ENCODE measurements at regions of chr3 and their contacts with region 1.

Region 1: DNA sequence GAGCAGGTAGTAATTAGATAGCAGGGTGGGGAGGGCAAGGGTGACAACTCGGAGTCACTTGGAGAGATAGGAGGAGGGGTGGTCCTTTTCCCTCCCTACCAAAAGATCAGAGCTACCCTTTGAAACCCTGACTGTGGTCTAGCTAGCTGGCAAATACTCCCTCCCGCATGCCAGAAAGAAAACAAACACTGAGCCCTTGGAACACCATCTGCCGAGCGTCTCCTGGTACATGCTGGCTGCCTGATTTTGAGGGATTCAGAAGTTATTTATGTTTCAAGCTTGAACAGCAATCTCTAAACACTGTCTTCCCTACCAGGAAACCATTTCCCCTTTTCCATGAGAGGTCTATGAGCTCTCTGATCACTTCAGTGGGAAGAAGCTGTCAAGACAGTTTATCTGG is 291.6 kb upstream of the CFAP20DC start:
- DNase-seq: no peak

Region 2: DNA sequence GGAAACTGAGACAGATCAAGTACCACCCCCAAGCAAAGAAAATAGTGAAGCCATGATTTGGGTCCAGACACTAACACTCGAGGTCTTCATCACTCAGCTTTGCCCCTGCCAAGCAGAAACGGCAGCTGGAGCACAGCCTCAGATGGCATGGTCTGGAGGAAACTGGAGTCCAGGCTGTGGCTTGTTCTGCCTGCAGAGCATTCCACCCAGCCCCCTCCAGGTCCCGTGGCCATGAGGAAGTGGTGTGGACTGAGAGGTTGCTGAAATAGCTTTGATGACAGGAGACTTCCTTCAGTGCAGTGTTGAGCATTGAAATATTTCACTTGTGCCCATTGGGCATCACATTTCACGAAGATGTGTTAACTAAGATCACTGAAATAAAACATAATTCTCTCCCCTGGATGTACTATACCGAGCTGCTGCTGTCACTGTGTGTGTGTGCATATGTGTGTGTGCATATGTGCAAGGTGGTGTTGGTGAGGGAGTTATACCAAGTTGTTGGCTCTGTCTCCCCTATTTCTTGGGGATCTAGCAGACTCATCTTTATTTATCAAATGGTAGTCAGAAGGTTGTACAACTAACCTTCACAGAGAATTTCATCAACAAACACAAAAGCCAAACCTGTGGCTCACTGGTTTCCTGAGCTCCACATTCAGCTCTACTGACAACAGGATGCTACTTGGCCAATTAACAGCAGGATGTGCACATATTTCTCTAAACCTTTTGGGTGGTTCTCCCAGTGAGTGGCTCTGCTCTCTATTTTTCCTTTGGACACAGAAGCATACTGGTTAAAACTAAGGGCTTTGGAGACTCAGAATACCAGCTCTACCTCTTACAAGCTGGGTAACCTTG is 368.5 kb after region 1 on chr3:
- intact Hi-C with region 1: no loop called
- DNase-seq: peak; percentile 89

Region 3: GRCh38 chr3:61268644-61269043 is 1927.2 kb after region 1 on chr3:
- intact Hi-C with region 1: loop called in 1 of 2 experiments (anchors 5 kb)
- DNase-seq: no peak

Measured in posterior vena cava (tissue), 2 donors.